ENCODE measurements at regions of chr1 and their contacts with region 1.

Region 1: DNA sequence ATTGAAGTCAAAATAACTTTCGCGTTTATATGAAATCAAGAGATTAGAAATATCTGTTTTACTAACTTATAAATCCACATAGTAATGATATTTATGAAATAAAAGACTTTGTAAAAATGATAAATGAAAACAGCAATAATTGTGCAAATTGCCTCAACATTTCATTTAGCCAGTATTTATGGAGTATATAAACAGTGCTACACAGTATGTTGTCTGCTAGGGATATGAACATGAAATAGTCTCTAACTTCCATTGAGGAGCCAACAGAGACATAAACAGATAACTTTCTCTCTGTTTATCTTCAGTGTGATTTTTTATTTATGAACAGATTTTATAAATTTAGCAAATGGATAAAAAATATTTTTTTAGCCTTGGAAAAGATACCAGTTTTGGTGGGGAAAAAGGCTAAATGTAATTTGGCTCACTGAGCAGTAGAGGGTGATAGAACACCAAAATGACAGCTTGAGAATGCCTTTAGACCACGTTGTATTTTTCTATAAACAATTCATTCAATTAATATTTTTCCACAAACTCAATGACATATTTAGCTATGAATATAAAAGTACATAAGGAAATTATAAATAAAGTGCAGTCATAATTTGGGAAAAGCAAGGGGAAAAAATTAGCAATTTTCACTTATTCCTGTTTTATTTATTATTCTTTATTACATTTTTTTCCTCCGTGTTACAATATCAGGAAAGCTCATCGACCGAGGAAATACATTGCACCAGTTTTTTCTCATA is 47.5 kb upstream of the EEIG2 start:
- DNase-seq: no peak
- ATAC-seq: peak; percentile 32

Region 2: GRCh38 chr1:108559215-108560186 is 47.1 kb after region 1 on chr1 and contains the start of gene EEIG2:
- intact Hi-C with region 1: loop called (anchors 10 kb)
- DNase-seq: peak; percentile 93
- ATAC-seq: peak; percentile 97
- total RNA-seq, gene EEIG2: 5.0 TPM

Region 3: DNA sequence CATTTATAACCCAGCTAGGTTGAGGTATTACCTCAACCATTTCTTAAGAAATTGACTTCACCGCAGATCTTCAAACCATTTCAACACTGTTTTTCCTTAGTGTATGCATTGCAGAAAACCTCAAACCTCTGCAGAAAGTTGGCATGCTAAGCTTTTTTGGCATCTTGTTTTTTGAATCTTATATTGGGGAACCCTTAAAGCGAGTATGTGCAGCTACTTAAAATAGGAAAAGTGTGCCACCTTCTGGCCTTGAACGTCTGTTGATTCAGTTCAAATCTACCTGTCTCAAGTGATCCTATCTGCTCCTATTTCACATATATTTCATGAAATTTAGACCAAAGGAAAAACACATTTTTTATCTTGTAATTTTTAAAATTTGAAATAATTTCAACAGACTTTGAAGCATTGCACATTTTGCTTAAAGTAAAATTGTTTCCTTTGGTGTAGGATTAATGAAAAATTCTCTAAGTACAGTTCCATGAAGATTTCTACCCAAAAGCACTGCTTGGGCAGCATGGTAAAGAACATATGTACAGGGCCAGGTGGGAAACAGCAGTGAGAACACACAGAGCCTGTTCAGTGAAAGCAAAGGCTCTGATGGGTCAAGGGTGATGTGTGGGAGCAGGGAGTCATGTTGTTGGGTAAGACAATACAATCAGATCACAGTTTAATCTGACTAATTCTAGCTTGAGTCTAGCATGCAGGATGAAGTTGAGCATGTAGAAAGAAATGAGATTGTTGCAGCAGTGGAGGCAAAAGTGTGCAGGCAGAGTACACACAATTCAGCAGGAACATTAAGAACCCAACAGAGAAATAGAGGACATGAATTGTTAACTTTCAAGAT is 131.3 kb after region 1 on chr1:
- intact Hi-C with region 1: loop called (anchors 1 kb)
- DNase-seq: no peak
- ATAC-seq: peak; percentile 68